Naive thymus-derived CD8-positive, alpha-beta T cell (primary cell): ENCODE measurements at regions of chr22 and their contacts with region 1.

Region 1: DNA sequence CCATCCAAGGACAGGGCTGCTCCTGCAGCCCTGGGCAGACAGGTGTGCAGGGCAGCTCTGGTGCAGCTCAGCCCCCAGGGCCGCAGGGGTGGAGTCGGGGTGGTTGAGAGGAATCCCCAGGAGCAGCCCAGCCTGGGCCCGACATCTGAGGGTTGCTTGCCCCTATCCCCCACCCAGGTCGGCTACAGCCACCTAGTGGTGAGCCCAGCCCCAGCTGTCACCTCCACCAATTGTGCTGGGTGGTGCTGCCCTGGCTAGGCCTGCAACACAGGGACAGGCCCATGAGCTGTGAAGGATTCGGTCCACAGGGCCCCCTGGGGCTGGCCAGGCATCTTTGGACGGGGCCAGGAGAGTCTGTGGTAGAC is 29.6 kb downstream of the RTN4R start:
- DNase-seq: peak; percentile 20 to 78 (median 46)
- ATAC-seq: peak; percentile 56 to 58
- H3K4me3 Mint-ChIP-seq: peak overlapping the region in 8 of 10 donors; percentile 19 to 69 (median 40)
- H3K27ac Mint-ChIP-seq: peak overlapping the region; percentile 51 to 89 (median 86)
- H3K4me1 Mint-ChIP-seq: peaks cover 8 to 39% (median 34%) of the 10 kb centered on the region in 4 donors
- H3K27me3 Mint-ChIP-seq: no peaks in the 10 kb centered on the region

Region 2: GRCh38 chr22:20205964-20206708 is 32.4 kb before region 1 on chr22:
- POLR2A ChIA-PET with region 1: interaction called, 15 read pairs
- DNase-seq: peak; percentile 28 to 85 (median 67)
- ATAC-seq: peak; percentile 95 to 96
- H3K4me3 Mint-ChIP-seq: peak overlapping the region; percentile 85 to 97 (median 94)
- H3K27ac Mint-ChIP-seq: peak overlapping the region; percentile 91 to 97 (median 94)
- H3K4me1 Mint-ChIP-seq: peaks cover 23 to 35% (median 28%) of the 10 kb centered on the region in 4 donors
- H3K27me3 Mint-ChIP-seq: no peaks in the 10 kb centered on the region